ENCODE measurements at regions of chr6 and their contacts with region 1.

Region 1: GRCh38 chr6:129726650-129727049 is 16.7 kb upstream of the ARHGAP18 start:
- DNase-seq: no peak
- CTCF ChIP-seq: no peak

Region 2: GRCh38 chr6:129598244-129599187 is 128.1 kb before region 1 on chr6:
- in situ Hi-C with region 1: loop called (anchors 5 kb)
- DNase-seq: peak; percentile 34
- CTCF ChIP-seq: peak; percentile 67